SK-N-SH (cell line): ENCODE measurements at regions of chr4 and their contacts with region 1.

Region 1: GRCh38 chr4:78951862-78952472 is 12.7 kb upstream of the PAQR3 start:
- DNase-seq: peak; percentile 30
- H3K4me3 ChIP-seq: no peak overlapping the region; a peak in 1 of 4 replicates
- H3K27ac ChIP-seq: no peak overlapping the region
- H3K4me1 ChIP-seq: peaks cover 0 to 1% of the 10 kb centered on the region in 2 experiments; a peak in 1 of 4 replicates
- H3K27me3 ChIP-seq: no peaks in the 10 kb centered on the region
- CTCF ChIP-seq: peak; percentile 83
- EP300 ChIP-seq: no peak
- RAD21 ChIP-seq: peak; percentile 95

Region 2: GRCh38 chr4:78938868-78939666 is 12.9 kb before region 1 on chr4 and contains the start of gene PAQR3:
- CTCF ChIA-PET with region 1: interaction called, 25 read pairs
- POLR2A ChIA-PET with region 1: interaction called, 3 read pairs
- DNase-seq: peak; percentile 97
- H3K4me3 ChIP-seq: peak within 1 kb of the TSS; percentile 81 to 96
- H3K27ac ChIP-seq: peak within 1 kb of the TSS; percentile 36 to 73; a peak in 3 of 4 replicates
- H3K4me1 ChIP-seq: peaks cover 0 to 6% of the 10 kb centered on the region in 2 experiments; a peak in 2 of 4 replicates
- H3K27me3 ChIP-seq: no peaks in the 10 kb centered on the region
- CTCF ChIP-seq: no peak
- EP300 ChIP-seq: no peak; a peak in 1 of 4 replicates
- RAD21 ChIP-seq: no peak
- polyA plus RNA-seq, gene PAQR3: 10.3 and 14.6 TPM in 2 replicates

Region 3: GRCh38 chr4:78962597-78963115 is 10.7 kb after region 1 on chr4:
- CTCF ChIA-PET with region 1: interaction called, 30 read pairs
- POLR2A ChIA-PET with region 1: no interaction called
- DNase-seq: no peak
- H3K4me3 ChIP-seq: no peak overlapping the region
- H3K27ac ChIP-seq: no peak overlapping the region
- H3K4me1 ChIP-seq: no peaks in the 10 kb centered on the region
- H3K27me3 ChIP-seq: no peaks in the 10 kb centered on the region
- CTCF ChIP-seq: no peak
- EP300 ChIP-seq: no peak
- RAD21 ChIP-seq: no peak

Region 4: GRCh38 chr4:79576429-79576753 is 624.4 kb after region 1 on chr4:
- CTCF ChIA-PET with region 1: interaction called, 12 read pairs
- POLR2A ChIA-PET with region 1: no interaction called
- DNase-seq: peak; percentile 48
- H3K4me3 ChIP-seq: no peak overlapping the region
- H3K27ac ChIP-seq: no peak overlapping the region
- H3K4me1 ChIP-seq: no peaks in the 10 kb centered on the region; a peak in 1 of 4 replicates
- H3K27me3 ChIP-seq: no peaks in the 10 kb centered on the region; the same call in 1 of the 2 replicates
- CTCF ChIP-seq: peak; percentile 63
- EP300 ChIP-seq: no peak
- RAD21 ChIP-seq: peak; percentile 89

Region 5: GRCh38 chr4:80215449-80216052 is 1263.6 kb after region 1 on chr4:
- CTCF ChIA-PET with region 1: interaction called, 79 read pairs
- POLR2A ChIA-PET with region 1: no interaction called
- DNase-seq: no peak
- H3K4me3 ChIP-seq: peak overlapping the region in 1 of 2 experiments; percentile 28; a peak in 1 of 4 replicates
- H3K27ac ChIP-seq: no peak overlapping the region
- H3K4me1 ChIP-seq: peaks cover 4 to 7% of the 10 kb centered on the region in 2 experiments; a peak in 2 of 4 replicates
- H3K27me3 ChIP-seq: no peaks in the 10 kb centered on the region
- CTCF ChIP-seq: peak; percentile 74
- EP300 ChIP-seq: no peak
- RAD21 ChIP-seq: peak; percentile 82

Region 6: GRCh38 chr4:80335554-80336358 is 1383.8 kb after region 1 on chr4 and contains the start of gene CFAP299:
- CTCF ChIA-PET with region 1: interaction called, 54 read pairs
- POLR2A ChIA-PET with region 1: no interaction called
- DNase-seq: peak; percentile 89
- H3K4me3 ChIP-seq: peak within 1 kb of the TSS; percentile 84 to 85
- H3K27ac ChIP-seq: peak within 1 kb of the TSS; percentile 39 to 43; a peak in 3 of 4 replicates
- H3K4me1 ChIP-seq: peaks cover 0 to 7% of the 10 kb centered on the region in 2 experiments; a peak in 2 of 4 replicates
- H3K27me3 ChIP-seq: no peaks in the 10 kb centered on the region
- CTCF ChIP-seq: peak; percentile 71
- EP300 ChIP-seq: no peak
- RAD21 ChIP-seq: peak; percentile 61
- polyA plus RNA-seq, gene CFAP299: 1.2 and 2.3 TPM in 2 replicates